ENCODE measurements at regions of chr1 and their contacts with region 1.

Region 1: GRCh38 chr1:146007506-146008133 is 11.2 kb upstream of the TXNIP start:
- DNase-seq: no peak
- H3K4me3 ChIP-seq: peak overlapping the region in 1 of 4 donors; percentile 34
- H3K27ac ChIP-seq: peak overlapping the region in 3 of 4 donors; percentile 84 to 90 (median 88)
- H3K4me1 ChIP-seq: peaks cover 10 to 46% (median 11%) of the 10 kb centered on the region in 3 donors
- H3K27me3 ChIP-seq: no peaks in the 10 kb centered on the region
- CTCF ChIP-seq: no peak
- POLR2A ChIP-seq: no peak

Region 2: DNA sequence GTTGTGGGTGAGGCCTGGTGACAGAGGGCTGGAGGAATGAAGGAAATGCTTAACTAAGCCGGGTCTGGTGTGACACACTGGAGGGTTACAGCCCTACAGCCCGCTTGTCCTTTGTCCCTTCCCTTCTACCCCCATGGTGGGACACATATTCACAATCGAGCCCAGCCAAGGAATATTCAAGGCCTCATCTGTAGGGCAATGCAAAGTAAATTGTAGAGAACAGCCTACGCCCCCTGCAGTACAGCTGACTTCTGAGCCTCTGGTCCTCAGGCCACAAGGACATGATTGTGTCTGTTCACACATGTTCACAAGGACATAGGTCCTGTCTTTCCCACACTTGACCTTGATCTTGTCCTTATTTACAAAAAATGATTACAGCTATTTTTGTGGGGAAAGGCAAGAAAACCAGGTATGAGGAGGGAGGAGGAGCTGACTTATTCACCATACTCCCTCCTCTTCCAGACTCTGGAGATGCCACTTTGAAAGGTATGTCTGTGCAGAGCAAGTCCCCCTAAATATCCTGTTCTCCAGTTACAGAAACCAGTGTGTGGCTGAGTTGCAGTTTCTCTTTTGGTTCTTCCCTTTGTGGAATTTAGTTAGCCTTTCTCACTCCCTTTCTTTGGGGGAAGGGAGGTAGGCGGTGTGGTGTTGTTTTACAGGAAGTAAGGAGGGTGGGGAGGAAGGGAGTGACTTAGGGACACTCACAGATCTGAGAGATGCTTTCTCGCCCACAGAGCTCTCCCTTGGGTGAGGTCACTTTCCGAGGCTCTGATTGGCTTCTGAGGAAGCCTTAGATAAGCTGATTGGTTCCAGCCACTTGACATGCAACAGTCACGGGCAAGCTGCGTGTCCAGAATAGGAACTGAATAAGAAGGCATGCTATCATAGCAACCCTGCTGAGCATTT is 28.5 kb before region 1 on chr1:
- intact Hi-C with region 1: loop called (anchors 2 kb)
- DNase-seq: peak; percentile 89
- H3K4me3 ChIP-seq: peak overlapping the region in 3 of 4 donors; percentile 24 to 51 (median 28)
- H3K27ac ChIP-seq: peak overlapping the region; percentile 90 to 98 (median 96)
- H3K4me1 ChIP-seq: peaks cover 50 to 73% (median 62%) of the 10 kb centered on the region in 3 donors
- H3K27me3 ChIP-seq: no peaks in the 10 kb centered on the region
- CTCF ChIP-seq: peak in 3 of 6 experiments; percentile 13 to 30 (median 16)
- POLR2A ChIP-seq: peak in 3 of 4 donors; percentile 22 to 87 (median 76)

Measured in esophagus squamous epithelium (tissue), 5 donors.